RWPE1 (cell line): ENCODE measurements at regions of chr12 and their contacts with region 1.

Region 1: GRCh38 chr12:42482445-42483237 is 106.9 kb downstream of the PRICKLE1 start:
- DNase-seq: peak; percentile 80
- H3K27ac ChIP-seq: peak overlapping the region; percentile 70
- CTCF ChIP-seq: peak; percentile 95

Region 2: GRCh38 chr12:42299392-42300308 is 183.0 kb before region 1 on chr12:
- CTCF ChIA-PET with region 1: no interaction called
- POLR2A ChIA-PET with region 1: no interaction called
- DNase-seq: no peak
- H3K27ac ChIP-seq: no peak overlapping the region
- CTCF ChIP-seq: no peak

Region 3: DNA sequence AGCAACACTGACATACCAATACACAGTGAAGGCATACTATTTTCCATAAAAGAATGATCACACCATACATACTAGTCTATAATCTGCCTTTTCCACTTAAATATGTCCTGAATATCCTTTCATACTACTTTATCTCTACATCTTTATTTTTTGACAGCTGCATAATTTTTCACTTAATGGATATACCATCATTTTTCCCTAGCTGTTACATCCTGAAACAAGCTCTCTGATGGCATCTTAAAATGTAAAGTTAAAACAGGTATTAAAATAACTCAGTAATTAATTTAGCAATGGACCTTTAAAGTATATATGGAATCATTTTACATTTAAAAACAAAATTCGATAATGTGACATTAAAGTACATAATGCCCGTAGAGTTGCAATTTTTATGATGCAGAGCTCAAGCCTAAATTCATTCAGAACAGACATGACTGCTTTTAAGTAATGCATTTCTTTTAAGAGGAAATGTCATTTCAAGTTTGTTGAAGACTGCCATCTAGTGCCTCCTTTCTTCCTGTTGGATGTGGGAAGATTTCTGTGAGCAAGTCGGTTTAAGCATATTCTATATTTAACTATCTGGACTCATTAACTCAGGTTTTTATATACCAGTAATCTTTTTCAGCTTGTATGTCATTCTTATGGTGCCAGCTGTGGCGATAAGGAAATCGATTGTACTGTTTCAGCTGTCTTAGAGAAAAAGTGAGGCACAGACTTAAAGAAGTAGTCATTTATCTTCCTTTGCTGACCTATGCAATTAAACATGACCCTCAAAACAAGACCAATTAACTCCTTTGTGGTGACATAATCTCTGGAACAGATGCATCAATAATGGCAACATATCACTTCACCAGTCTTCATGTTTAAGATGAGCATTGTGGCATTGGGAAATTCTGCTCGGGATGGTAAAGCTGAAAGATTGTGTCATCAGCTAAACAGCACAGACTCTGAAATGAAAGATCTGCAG is 86.6 kb after region 1 on chr12:
- CTCF ChIA-PET with region 1: interaction called, 14 read pairs
- POLR2A ChIA-PET with region 1: interaction called, 3 read pairs
- DNase-seq: peak; percentile 20
- H3K27ac ChIP-seq: no peak overlapping the region
- CTCF ChIP-seq: peak; percentile 70